Thyroid gland (tissue), 4 donors: ENCODE measurements at regions of chr11 and their contacts with region 1.

Region 1: DNA sequence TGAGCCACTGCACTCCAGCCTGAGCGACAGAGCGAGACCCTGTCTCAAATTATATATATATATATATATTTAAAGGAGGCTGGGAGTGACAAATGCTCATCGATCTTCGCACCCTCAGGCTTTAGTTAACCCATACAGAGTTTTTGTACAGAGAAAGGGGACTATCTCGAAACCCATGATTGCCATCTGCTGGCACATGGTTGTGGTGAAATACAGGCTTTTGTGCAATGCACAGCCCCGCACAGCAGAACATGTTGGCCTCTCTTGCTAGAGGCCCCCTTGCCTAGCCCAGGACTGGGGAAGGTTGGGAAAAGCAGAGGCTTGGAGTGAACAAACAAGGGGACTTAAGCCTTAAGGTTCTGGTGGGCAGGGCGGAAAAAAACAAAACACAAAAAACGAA is 3.6 kb downstream of the MYBPC3 start:
- DNase-seq: no peak
- H3K4me3 ChIP-seq: no peak overlapping the region
- H3K27ac ChIP-seq: no peak overlapping the region
- H3K4me1 ChIP-seq: no peaks in the 10 kb centered on the region
- H3K27me3 ChIP-seq: no peaks in the 10 kb centered on the region
- CTCF ChIP-seq: no peak
- POLR2A ChIP-seq: no peak

Region 2: DNA sequence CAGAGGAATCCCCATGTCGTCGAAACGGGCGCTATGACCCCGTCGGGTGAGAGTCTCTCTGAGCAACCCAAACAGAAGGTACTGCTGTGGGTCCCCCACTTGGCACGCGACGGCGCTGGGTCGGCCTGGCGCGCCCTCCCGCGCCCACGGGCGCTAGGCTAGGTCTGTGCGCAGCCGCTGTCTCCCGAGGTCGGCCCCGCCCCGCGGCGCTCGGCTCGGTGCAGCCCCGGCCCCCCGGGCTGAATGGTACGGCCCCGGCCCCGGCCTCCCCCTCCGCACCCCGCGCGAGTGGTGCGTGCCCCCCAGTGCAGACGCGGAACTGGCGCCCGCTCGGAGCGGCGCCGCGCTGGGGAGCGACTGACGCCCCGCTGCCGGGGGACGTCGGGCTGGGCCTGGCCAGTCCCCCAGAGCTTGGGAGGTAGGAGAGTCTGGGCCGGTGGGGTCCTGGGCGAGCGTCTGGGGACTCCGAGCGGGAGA is 79.0 kb before region 1 on chr11 and contains the start of gene MADD:
- intact Hi-C with region 1: loop called (anchors 10 kb)
- DNase-seq: peak; percentile 88 to 89
- H3K4me3 ChIP-seq: peak within 1 kb of the TSS; percentile 15 to 70 (median 37)
- H3K27ac ChIP-seq: peak within 1 kb of the TSS; percentile 72 to 96 (median 96)
- H3K4me1 ChIP-seq: peaks cover 12 to 39% of the 10 kb centered on the region in 2 donors
- H3K27me3 ChIP-seq: no peaks in the 10 kb centered on the region
- CTCF ChIP-seq: no peak
- POLR2A ChIP-seq: peak; percentile 11 to 89
- total RNA-seq, gene MADD: 29.0 to 49.7 (median 38.1) TPM